K562 (cell line): ENCODE measurements at regions of chr10 and their contacts with region 1.

Region 1: DNA sequence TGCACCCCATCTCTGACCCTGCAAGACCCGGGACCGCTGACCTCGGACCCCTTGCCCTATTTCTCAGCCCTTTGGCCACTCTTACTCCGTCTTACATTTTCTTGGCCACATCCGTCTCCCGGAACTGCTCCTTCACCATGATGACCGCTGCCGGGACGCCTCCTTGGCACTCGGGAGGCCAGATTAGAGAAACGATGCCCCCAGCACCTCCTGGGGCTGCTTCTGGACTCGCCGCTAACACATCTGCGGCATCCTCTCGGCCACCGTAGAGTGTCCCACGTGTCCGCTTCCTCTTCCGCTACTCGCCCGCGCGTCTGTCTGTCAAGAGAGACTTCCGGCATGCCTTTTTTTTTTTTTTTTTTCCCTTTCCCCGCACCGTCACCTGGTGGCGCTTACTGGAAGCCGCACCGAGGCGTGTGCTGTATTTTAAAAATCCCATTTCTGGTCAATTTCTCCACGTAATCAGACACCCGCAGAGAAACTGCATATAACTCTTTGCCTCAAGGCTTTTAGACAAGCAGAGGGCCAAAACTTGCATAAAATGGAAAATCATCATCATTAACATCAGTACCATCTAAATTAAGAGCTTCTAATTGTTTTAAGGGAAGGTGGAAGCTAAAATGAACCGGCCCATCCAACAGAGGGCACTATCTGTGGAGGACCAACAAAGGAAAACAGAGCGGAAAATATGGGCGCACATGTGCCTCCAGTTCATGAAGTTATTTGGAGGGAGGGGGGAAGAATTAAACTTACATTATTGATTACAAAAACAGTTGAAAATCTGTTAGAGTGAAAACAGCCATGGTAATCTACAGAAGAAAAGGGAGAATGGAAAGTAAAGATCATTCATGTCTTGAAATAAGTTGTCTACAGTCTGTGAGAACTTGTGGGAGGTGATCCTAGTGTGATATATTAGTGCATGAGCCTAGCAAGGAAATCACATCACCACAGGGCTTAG is at the start of gene POLR3A:
- DNase-seq: peak; percentile 95 to 99 (median 96)
- ATAC-seq: peak; percentile 82
- H3K4me3 ChIP-seq: peak within 1 kb of the TSS; percentile 89
- H3K27ac ChIP-seq: peak within 1 kb of the TSS; percentile 87
- H3K4me1 ChIP-seq: peaks cover 8% of the 10 kb centered on the region in 2 experiments; a peak in 3 of 5 replicates
- H3K27me3 ChIP-seq: no peaks in the 10 kb centered on the region
- CTCF ChIP-seq: peak; percentile 91 to 96 (median 93)
- EP300 ChIP-seq: no peak; the same call in 1 of the 2 replicates
- POLR2A ChIP-seq: peak; percentile 92
- RAD21 ChIP-seq: peak; percentile 38 to 46
- polyA plus RNA-seq, gene POLR3A: 14.9 to 28.8 TPM

Region 2: GRCh38 chr10:77846718-77847630 is 182.6 kb before region 1 on chr10:
- CTCF ChIA-PET with region 1: interaction called, 9 read pairs
- POLR2A ChIA-PET with region 1: interaction called, 3 read pairs
- in situ Hi-C with region 1: no loop called
- intact Hi-C with region 1: loop called (anchors 5 kb)
- DNase-seq: peak; percentile 79 to 88 (median 84)
- ATAC-seq: peak; percentile 90
- H3K4me3 ChIP-seq: no peak overlapping the region
- H3K27ac ChIP-seq: no peak overlapping the region
- H3K4me1 ChIP-seq: peaks cover 13% of the 10 kb centered on the region in 2 experiments
- H3K27me3 ChIP-seq: no peaks in the 10 kb centered on the region
- CTCF ChIP-seq: peak; percentile 87 to 96 (median 93)
- EP300 ChIP-seq: no peak
- POLR2A ChIP-seq: no peak
- RAD21 ChIP-seq: peak; percentile 86 to 91

Region 3: GRCh38 chr10:77979221-77979620 is 50.3 kb before region 1 on chr10:
- CTCF ChIA-PET with region 1: no interaction called
- POLR2A ChIA-PET with region 1: no interaction called
- in situ Hi-C with region 1: no loop called
- intact Hi-C with region 1: no loop called
- DNase-seq: no peak
- ATAC-seq: no peak
- H3K4me3 ChIP-seq: no peak overlapping the region
- H3K27ac ChIP-seq: no peak overlapping the region
- H3K4me1 ChIP-seq: peaks cover 0 to 7% of the 10 kb centered on the region in 2 experiments; a peak in 1 of 5 replicates
- H3K27me3 ChIP-seq: no peaks in the 10 kb centered on the region
- CTCF ChIP-seq: no peak
- EP300 ChIP-seq: no peak
- POLR2A ChIP-seq: no peak
- RAD21 ChIP-seq: no peak